Activated B cell treated with CpG ODN at 0.5 μM for 24 hours (primary cell): ENCODE measurements at regions of chr16 and their contacts with region 1.

Region 1: DNA sequence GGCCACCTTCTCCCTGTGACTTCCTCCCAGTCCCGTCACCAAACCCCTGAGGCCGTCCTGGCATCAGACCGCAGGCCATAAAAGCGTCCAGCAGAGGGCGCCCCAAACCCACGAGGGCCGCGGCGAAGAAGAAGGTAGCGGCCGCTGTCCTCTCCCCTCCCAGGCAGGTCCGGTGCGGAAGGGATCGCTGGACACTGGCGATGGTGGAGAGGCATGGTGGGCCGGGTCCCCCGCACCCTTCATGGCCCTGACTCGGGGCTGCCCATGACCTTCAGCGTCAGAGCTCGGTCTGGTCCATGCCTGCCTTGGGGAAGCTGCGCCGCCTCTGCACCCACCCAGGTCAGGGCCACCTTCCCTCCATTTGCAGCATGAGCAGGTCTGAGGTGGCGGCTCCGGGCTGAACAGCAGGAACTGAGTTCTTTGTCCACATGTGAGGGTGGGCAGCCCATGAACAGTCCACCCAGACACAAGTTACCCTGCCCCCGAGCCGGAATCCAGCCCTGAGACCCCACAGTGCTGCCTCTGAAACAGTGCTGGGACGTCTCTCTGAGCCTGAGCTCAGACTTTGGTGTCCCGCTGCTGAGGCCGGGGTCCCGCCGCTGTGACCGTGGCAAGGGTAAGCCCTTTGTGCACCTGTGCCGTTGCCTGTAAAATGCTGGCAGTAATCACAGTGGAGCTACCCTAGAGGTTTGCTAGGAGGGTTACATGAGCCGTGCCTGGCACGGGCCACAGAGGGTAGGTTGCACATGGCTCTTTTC is 40.8 kb upstream of the CMIP start:
- DNase-seq: peak; percentile 81
- ATAC-seq: peak; percentile 91
- H3K4me3 Mint-ChIP-seq: peak overlapping the region; percentile 19
- H3K27ac Mint-ChIP-seq: no peak overlapping the region
- H3K4me1 Mint-ChIP-seq: peaks cover 3% of the 10 kb centered on the region
- H3K27me3 Mint-ChIP-seq: peaks cover 7% of the 10 kb centered on the region
- CTCF ChIP-seq: peak; percentile 86

Region 2: GRCh38 chr16:81444448-81445121 is 40.8 kb after region 1 on chr16 and contains the start of gene CMIP:
- CTCF ChIA-PET with region 1: interaction called, 3 read pairs
- POLR2A ChIA-PET with region 1: no interaction called
- intact Hi-C with region 1: loop called (anchors 2 kb)
- DNase-seq: peak; percentile 88
- ATAC-seq: peak; percentile 82
- H3K4me3 Mint-ChIP-seq: peak within 1 kb of the TSS; percentile 87
- H3K27ac Mint-ChIP-seq: peak within 1 kb of the TSS; percentile 79
- H3K4me1 Mint-ChIP-seq: peaks cover 43% of the 10 kb centered on the region
- H3K27me3 Mint-ChIP-seq: no peaks in the 10 kb centered on the region
- CTCF ChIP-seq: no peak
- total RNA-seq, gene CMIP: 62.4 and 76.3 TPM in 2 replicates

Region 3: DNA sequence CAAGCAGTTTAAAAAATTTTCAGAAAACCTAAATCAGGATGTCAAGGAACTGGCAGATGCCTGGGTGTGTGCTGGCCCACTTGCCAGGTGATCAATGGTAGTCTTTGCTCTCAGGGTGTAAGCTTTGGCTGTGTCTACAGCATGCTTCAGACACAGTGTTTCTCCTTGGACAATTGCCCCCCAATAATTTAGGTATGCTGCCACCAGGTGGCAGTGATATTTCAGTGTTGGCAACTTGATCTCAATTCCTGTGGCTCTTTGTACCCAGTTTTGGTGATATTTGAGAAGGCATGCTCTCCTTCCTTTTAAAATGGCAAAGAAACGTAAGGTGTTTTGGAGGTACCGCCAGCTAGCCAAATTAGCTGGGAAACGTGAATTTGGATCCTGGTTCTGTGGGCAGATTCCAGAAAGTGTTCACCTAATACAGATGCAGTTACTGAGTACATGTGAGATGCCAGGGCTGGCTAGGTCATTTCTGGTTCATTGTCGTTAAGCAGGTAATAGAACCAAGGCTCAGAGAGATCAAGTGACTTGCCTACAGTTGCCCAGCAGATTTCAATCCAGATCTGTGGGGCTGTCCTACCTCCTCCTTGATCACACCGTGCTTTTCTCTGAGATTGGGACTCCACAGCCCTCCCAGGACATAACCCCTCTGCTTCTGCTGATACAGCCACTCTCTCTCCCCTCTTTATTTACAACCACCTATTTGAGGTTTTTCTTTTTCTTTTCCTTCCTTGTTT is 219.7 kb after region 1 on chr16:
- CTCF ChIA-PET with region 1: interaction called, 25 read pairs
- POLR2A ChIA-PET with region 1: no interaction called
- intact Hi-C with region 1: loop called (anchors 1 kb)
- DNase-seq: no peak
- ATAC-seq: peak; percentile 41
- H3K4me3 Mint-ChIP-seq: no peak overlapping the region
- H3K27ac Mint-ChIP-seq: no peak overlapping the region
- H3K4me1 Mint-ChIP-seq: peaks cover 17% of the 10 kb centered on the region
- H3K27me3 Mint-ChIP-seq: no peaks in the 10 kb centered on the region
- CTCF ChIP-seq: no peak

Region 4: GRCh38 chr16:81696961-81697615 is 293.3 kb after region 1 on chr16:
- CTCF ChIA-PET with region 1: interaction called, 31 read pairs
- POLR2A ChIA-PET with region 1: no interaction called
- intact Hi-C with region 1: loop called (anchors 1 kb)
- DNase-seq: no peak
- ATAC-seq: no peak
- H3K4me3 Mint-ChIP-seq: no peak overlapping the region
- H3K27ac Mint-ChIP-seq: no peak overlapping the region
- H3K4me1 Mint-ChIP-seq: no peaks in the 10 kb centered on the region
- H3K27me3 Mint-ChIP-seq: no peaks in the 10 kb centered on the region
- CTCF ChIP-seq: no peak

Region 5: GRCh38 chr16:81723098-81723723 is 319.4 kb after region 1 on chr16:
- CTCF ChIA-PET with region 1: interaction called, 25 read pairs
- POLR2A ChIA-PET with region 1: interaction called, 4 read pairs
- intact Hi-C with region 1: loop called (anchors 1 kb)
- DNase-seq: no peak
- ATAC-seq: peak; percentile 92
- H3K4me3 Mint-ChIP-seq: no peak overlapping the region
- H3K27ac Mint-ChIP-seq: no peak overlapping the region
- H3K4me1 Mint-ChIP-seq: peaks cover 22% of the 10 kb centered on the region
- H3K27me3 Mint-ChIP-seq: peaks cover 1% of the 10 kb centered on the region
- CTCF ChIP-seq: no peak

Region 6: GRCh38 chr16:81730090-81731051 is 326.6 kb after region 1 on chr16:
- CTCF ChIA-PET with region 1: interaction called, 7 read pairs
- POLR2A ChIA-PET with region 1: interaction called, 4 read pairs
- intact Hi-C with region 1: loop called (anchors 2 kb)
- DNase-seq: peak; percentile 65
- ATAC-seq: peak; percentile 95
- H3K4me3 Mint-ChIP-seq: peak overlapping the region; percentile 85
- H3K27ac Mint-ChIP-seq: peak overlapping the region; percentile 86
- H3K4me1 Mint-ChIP-seq: peaks cover 31% of the 10 kb centered on the region
- H3K27me3 Mint-ChIP-seq: no peaks in the 10 kb centered on the region
- CTCF ChIP-seq: no peak